HEK293T (cell line): ENCODE measurements at regions of chr6 and their contacts with region 1.

Region 1: GRCh38 chr6:34757687-34758274 is 476 bp downstream of the SNRPC start:
- DNase-seq: no peak

Region 2: GRCh38 chr6:34696739-34697543 is 60.8 kb before region 1 on chr6 and contains the start of gene ILRUN:
- CTCF ChIA-PET with region 1: interaction called, 3 read pairs
- POLR2A ChIA-PET with region 1: interaction called, 18 read pairs
- DNase-seq: peak; percentile 95

Region 3: GRCh38 chr6:34745277-34746103 is 12.3 kb before region 1 on chr6:
- CTCF ChIA-PET with region 1: no interaction called
- POLR2A ChIA-PET with region 1: interaction called, 21 read pairs
- DNase-seq: no peak

Region 4: GRCh38 chr6:34876472-34876871 is 118.7 kb after region 1 on chr6:
- CTCF ChIA-PET with region 1: no interaction called
- POLR2A ChIA-PET with region 1: no interaction called
- DNase-seq: no peak